ENCODE measurements at regions of chr7 and their contacts with region 1.

Region 1: GRCh38 chr7:38232502-38233366 is 40.7 kb downstream of the TARP start:
- DNase-seq: peak; percentile 82
- H3K4me3 Mint-ChIP-seq: peak overlapping the region; percentile 64
- H3K27ac Mint-ChIP-seq: peak overlapping the region; percentile 91
- H3K4me1 Mint-ChIP-seq: peaks cover 82% of the 10 kb centered on the region
- H3K27me3 Mint-ChIP-seq: no peaks in the 10 kb centered on the region

Region 2: DNA sequence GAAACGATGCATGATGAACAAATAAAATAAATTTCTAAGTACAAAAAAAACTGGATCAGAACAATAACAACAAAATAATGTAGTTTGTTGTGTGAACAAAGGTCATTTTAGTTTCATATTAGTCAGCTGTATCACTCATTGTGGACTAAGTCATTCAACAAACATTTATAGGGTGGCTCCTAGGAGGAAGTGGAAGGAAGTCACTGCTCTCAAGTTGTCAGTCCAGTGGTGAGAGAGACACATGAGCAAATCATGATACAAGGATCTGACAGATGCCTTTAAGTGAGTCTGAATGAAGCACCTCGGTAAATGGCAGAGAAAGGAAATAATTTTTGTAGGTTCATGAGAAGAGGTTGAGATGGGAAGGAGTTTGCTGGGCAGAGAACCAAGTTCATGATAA is 255.5 kb before region 1 on chr7:
- intact Hi-C with region 1: loop called (anchors 10 kb)
- DNase-seq: no peak
- H3K4me3 Mint-ChIP-seq: no peak overlapping the region
- H3K27ac Mint-ChIP-seq: no peak overlapping the region
- H3K4me1 Mint-ChIP-seq: peaks cover 5% of the 10 kb centered on the region
- H3K27me3 Mint-ChIP-seq: peaks cover 6% of the 10 kb centered on the region

Region 3: DNA sequence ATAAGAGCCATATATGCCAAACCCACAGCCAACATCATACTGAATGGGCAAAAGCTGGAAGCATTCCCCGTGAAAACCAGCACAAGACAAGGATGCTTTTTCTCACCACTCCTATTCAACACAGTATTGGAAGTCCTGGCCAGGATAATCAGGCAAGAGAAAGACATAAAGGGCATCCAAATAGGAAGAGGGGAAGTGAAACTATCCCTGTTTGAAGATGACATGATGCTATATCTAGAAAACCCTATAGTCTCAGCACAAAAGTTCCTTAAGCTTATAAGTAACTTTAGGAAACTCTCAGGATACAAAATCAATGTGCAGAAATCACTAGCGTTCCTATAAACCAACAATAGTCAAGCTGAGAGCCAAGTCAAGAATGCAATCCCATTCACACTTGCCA is 78.5 kb before region 1 on chr7:
- intact Hi-C with region 1: no loop called
- DNase-seq: no peak
- H3K4me3 Mint-ChIP-seq: no peak overlapping the region
- H3K27ac Mint-ChIP-seq: no peak overlapping the region
- H3K4me1 Mint-ChIP-seq: no peaks in the 10 kb centered on the region
- H3K27me3 Mint-ChIP-seq: peaks cover 41% of the 10 kb centered on the region

Region 4: GRCh38 chr7:38215735-38216670 is 16.7 kb before region 1 on chr7:
- intact Hi-C with region 1: loop called (anchors 2 kb)
- DNase-seq: peak; percentile 70
- H3K4me3 Mint-ChIP-seq: no peak overlapping the region
- H3K27ac Mint-ChIP-seq: no peak overlapping the region
- H3K4me1 Mint-ChIP-seq: peaks cover 36% of the 10 kb centered on the region
- H3K27me3 Mint-ChIP-seq: no peaks in the 10 kb centered on the region

Region 5: DNA sequence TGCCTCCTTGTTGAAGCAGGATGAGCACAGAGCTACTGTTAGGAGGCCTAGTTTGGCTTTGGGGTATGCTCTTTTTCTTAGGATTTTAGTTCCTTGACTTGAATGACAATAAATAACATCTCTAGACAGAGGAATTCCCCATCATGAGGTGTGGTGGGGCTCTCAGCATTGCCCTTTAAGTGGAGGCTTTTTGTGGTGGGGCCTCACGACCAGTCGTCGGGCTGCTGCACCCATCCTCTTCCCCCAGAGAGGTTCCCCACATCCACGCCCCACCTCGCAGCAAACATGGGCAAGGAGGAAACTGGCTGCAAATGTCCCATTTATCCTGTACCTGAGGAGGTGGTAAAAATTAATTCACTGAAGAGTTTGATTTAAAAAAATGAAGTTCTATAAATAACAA is 76.8 kb after region 1 on chr7:
- intact Hi-C with region 1: loop called (anchors 2 kb)
- DNase-seq: no peak
- H3K4me3 Mint-ChIP-seq: no peak overlapping the region
- H3K27ac Mint-ChIP-seq: peak overlapping the region; percentile 55
- H3K4me1 Mint-ChIP-seq: peaks cover 13% of the 10 kb centered on the region
- H3K27me3 Mint-ChIP-seq: no peaks in the 10 kb centered on the region

Region 6: GRCh38 chr7:38369816-38370493 is 137.2 kb after region 1 on chr7:
- intact Hi-C with region 1: loop called (anchors 1 kb)
- DNase-seq: peak; percentile 66
- H3K4me3 Mint-ChIP-seq: no peak overlapping the region
- H3K27ac Mint-ChIP-seq: peak overlapping the region; percentile 61
- H3K4me1 Mint-ChIP-seq: peaks cover 38% of the 10 kb centered on the region
- H3K27me3 Mint-ChIP-seq: no peaks in the 10 kb centered on the region